K562 (cell line): ENCODE measurements at regions of chr16 and their contacts with region 1.

Region 1: DNA sequence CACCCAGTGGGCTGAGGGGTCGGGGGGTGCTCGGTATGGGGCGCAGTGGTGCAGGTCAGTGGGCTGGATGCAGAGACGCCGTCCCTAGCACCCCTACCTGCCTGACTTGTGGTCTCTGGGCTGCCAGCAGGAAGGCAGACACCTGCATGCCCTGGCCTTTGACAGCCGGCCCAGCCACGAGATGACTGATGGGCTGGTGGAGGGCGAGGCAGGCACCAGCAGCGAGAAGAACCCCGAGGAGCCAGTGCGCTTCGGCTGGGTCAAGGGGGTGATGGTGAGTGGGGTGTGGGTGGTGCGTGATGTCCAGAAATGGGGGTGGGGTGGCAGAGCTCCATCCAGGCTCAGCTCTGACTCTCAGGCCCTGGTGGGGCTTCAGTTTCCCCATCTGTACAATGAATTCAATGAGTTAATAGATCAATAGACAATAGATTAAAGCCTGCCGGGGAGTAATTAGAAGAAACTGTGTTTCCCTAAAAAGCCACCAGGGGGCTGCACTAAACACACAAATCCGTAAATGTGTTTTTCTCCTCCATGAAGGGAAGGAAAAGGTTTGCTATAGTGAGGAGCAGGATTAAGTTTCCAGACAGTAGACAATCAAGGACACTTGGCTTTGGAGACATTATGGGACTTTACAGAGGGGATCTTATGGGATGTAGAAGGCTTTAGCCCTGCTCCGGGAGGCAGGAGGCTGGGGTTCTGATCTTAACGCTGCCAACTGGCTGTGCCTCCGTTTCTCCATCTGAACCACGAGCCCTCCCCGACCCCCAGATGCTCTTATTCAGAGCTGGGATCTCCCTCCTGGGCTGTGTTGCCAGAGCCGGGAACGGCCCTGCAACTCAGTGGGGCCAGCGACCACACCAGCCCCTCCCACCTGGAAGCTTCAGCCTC is 2.2 kb downstream of the SLC12A3 start:
- DNase-seq: peak; percentile 44 to 65 (median 47)
- ATAC-seq: peak; percentile 34; the same call in 1 of the 3 replicates
- H3K4me3 ChIP-seq: no peak overlapping the region
- H3K27ac ChIP-seq: no peak overlapping the region
- H3K4me1 ChIP-seq: peaks cover 0 to 16% of the 10 kb centered on the region in 2 experiments; a peak in 3 of 5 replicates
- H3K27me3 ChIP-seq: peaks cover 0 to 10% of the 10 kb centered on the region in 2 experiments; a peak in 3 of 5 replicates
- CTCF ChIP-seq: peak; percentile 45 to 81 (median 72); a peak in 5 of 6 replicates
- EP300 ChIP-seq: no peak
- POLR2A ChIP-seq: no peak
- RAD21 ChIP-seq: peak; percentile 66 to 77

Region 2: DNA sequence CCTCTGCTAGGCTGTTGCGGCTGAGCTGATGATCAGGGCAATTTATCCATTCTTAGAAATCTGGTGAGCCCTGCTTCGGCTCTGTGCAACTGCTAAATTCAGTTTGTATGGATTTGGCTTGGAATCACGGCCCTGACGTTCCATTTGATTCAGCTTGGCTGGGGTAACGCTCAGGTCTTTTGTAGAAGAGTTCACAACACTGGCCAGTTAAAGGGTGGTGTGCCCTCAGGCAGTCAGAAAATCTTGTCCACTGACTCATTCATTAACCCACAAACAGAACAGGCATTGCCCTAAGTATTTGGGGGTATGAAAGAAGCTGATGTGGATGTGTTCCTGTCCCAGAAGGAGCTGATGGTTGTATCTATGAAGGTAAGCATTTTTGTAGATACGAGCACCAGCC is 622.0 kb before region 1 on chr16:
- CTCF ChIA-PET with region 1: no interaction called
- POLR2A ChIA-PET with region 1: no interaction called
- in situ Hi-C with region 1: no loop called
- intact Hi-C with region 1: no loop called
- DNase-seq: no peak
- ATAC-seq: no peak
- H3K4me3 ChIP-seq: no peak overlapping the region
- H3K27ac ChIP-seq: no peak overlapping the region
- H3K4me1 ChIP-seq: peaks cover 7% of the 10 kb centered on the region in 2 experiments; a peak in 4 of 5 replicates
- H3K27me3 ChIP-seq: peaks cover 0 to 4% of the 10 kb centered on the region in 2 experiments; a peak in 1 of 5 replicates
- CTCF ChIP-seq: no peak
- EP300 ChIP-seq: no peak
- POLR2A ChIP-seq: no peak
- RAD21 ChIP-seq: no peak

Region 3: DNA sequence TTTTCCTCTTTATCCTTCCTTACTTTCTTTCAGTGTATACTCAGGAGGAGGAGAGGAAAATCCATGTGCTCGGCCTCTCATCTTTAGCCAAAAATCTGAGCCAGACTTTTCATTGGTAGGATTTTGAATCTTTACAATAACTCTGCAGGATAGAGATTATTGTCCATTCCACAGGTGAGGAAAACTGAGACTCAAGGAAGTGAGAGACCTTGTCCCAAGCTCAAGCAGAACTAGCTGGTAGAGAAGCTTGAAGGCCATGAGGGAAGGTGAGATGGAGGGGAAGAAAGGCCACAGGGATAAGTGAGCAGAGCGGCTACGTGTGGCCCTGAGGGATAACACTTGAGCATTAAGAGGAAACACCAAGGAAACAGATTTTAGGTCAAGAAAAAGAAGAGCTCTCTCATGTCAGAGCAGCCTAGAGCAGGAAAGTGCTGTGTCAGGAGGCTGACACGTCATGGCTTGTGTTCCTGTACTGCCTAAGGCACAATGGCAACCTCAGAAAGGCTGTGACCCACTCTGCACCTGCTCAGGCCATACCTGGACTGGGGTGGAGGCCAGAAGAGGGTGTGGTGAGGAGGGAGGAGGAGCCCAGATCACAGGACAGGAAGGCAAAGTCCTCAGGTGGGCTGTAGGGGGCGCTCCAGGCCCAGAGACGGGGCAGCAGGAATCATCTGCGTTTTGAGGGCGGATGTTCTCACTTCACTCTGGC is 290.4 kb before region 1 on chr16:
- CTCF ChIA-PET with region 1: no interaction called
- POLR2A ChIA-PET with region 1: no interaction called
- in situ Hi-C with region 1: loop called (anchors 10 kb)
- intact Hi-C with region 1: loop called (anchors 2 kb)
- DNase-seq: peak; percentile 77 to 86 (median 84)
- ATAC-seq: peak; percentile 100
- H3K4me3 ChIP-seq: no peak overlapping the region
- H3K27ac ChIP-seq: no peak overlapping the region
- H3K4me1 ChIP-seq: no peaks in the 10 kb centered on the region
- H3K27me3 ChIP-seq: peaks cover 2 to 10% of the 10 kb centered on the region in 2 experiments; a peak in 4 of 5 replicates
- CTCF ChIP-seq: peak; percentile 93 to 96 (median 95)
- EP300 ChIP-seq: no peak
- POLR2A ChIP-seq: no peak
- RAD21 ChIP-seq: peak; percentile 88 to 96

Region 4: DNA sequence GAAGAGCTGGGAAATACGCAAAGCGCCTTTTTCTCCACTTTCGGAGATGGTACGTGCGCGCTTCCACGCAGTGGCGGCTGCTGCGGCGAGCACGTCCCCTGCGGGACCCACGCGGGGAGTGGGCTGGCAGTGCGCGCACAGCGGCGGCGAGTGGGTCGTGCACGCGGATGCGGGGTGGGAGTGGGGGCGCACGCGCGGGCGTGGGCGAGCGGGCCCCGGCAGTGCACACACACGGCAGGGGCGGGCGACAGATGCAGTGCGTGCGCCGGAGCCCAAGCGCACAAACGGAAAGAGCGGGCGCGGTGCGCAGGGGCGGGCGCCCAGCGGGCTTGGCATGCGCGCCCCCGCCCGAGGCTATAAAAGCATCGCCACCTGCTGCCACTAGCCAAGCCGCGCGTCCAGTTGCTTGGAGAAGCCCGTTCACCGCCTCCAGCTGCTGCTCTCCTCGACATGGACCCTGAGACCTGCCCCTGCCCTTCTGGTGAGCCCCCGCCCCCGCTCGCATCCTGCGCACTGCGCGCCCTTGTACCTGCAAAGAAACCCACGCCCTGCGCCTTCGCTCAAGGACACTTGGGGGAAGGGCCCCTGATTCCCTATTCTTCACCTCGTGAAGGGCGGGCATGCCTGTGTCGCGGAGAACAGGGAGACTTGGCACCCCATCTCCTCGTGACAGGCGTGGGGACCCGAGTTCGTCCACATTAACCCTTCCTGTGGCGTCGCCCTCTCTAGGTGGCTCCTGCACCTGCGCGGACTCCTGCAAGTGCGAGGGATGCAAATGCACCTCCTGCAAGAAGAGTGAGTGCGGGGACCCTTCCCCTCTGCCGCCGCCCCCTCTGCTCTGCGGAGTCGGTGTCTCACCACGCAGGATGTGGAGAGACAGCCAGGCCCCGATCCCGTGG is 277.8 kb before region 1 on chr16 and contains the start of gene MT3:
- CTCF ChIA-PET with region 1: no interaction called
- POLR2A ChIA-PET with region 1: no interaction called
- in situ Hi-C with region 1: loop called (anchors 10 kb)
- intact Hi-C with region 1: no loop called
- DNase-seq: no peak
- ATAC-seq: no peak
- H3K4me3 ChIP-seq: no peak within 1 kb of the TSS
- H3K27ac ChIP-seq: no peak within 1 kb of the TSS
- H3K4me1 ChIP-seq: peaks cover 0 to 6% of the 10 kb centered on the region in 2 experiments; a peak in 1 of 5 replicates
- H3K27me3 ChIP-seq: peaks cover 17 to 62% of the 10 kb centered on the region in 2 experiments
- CTCF ChIP-seq: no peak
- EP300 ChIP-seq: no peak
- POLR2A ChIP-seq: no peak
- RAD21 ChIP-seq: no peak
- polyA plus RNA-seq, gene MT3: not detected

Region 5: GRCh38 chr16:56847173-56847910 is 19.8 kb before region 1 on chr16:
- CTCF ChIA-PET with region 1: no interaction called
- POLR2A ChIA-PET with region 1: no interaction called
- in situ Hi-C with region 1: no loop called
- intact Hi-C with region 1: loop called (anchors 1 kb)
- DNase-seq: no peak
- ATAC-seq: no peak
- H3K4me3 ChIP-seq: no peak overlapping the region
- H3K27ac ChIP-seq: no peak overlapping the region
- H3K4me1 ChIP-seq: no peaks in the 10 kb centered on the region; a peak in 2 of 5 replicates
- H3K27me3 ChIP-seq: no peaks in the 10 kb centered on the region
- CTCF ChIP-seq: no peak
- EP300 ChIP-seq: no peak
- POLR2A ChIP-seq: no peak
- RAD21 ChIP-seq: no peak

Region 6: DNA sequence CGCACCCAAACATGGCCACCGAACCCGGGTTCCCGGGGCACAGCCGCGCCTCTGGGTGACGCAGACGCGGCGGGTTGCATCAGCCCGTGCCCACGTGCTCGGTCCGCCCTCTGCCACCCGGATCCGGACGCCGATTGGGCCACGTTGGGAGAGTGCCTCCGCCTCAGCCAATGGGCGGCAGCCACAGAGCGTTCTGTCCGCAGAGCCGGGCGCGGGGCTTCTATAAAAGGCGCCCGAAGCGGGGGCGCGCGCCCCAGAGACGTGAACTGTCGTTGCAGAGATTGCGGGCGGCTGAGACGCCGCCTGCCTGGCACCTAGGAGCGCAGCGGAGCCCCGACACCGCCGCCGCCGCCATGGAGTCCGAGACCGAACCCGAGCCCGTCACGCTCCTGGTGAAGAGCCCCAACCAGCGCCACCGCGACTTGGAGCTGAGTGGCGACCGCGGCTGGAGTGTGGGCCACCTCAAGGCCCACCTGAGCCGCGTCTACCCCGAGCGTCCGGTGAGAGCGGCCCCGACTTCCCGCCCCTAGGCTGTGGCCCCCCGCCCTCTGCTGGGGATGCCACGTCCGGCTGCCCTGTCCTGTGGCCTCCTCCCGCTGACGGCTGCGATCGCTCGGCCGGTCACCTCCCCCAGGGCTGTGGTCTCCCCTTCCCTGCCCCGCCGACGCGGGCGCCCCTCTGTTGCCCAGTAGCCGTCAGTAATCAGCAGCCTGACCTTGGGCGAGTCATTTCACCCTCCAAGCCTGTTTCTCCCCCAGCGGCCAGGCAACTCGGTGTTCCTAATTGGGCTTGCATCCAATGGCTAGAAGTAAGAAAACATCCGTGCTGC is 64.9 kb after region 1 on chr16 and contains the start of gene HERPUD1:
- CTCF ChIA-PET with region 1: no interaction called
- POLR2A ChIA-PET with region 1: interaction called, 4 read pairs
- in situ Hi-C with region 1: no loop called
- intact Hi-C with region 1: loop called (anchors 5 kb)
- DNase-seq: peak; percentile 97 to 99 (median 98)
- ATAC-seq: peak; percentile 92
- H3K4me3 ChIP-seq: peak within 1 kb of the TSS; percentile 95
- H3K27ac ChIP-seq: peak within 1 kb of the TSS; percentile 91
- H3K4me1 ChIP-seq: peaks cover 17 to 22% of the 10 kb centered on the region in 2 experiments; a peak in 4 of 5 replicates
- H3K27me3 ChIP-seq: no peaks in the 10 kb centered on the region
- CTCF ChIP-seq: peak in 2 of 3 experiments; percentile 15 to 23; a peak in 2 of 6 replicates
- EP300 ChIP-seq: peak; percentile 18; the same call in 1 of the 2 replicates
- POLR2A ChIP-seq: peak; percentile 95
- RAD21 ChIP-seq: no peak
- polyA plus RNA-seq, gene HERPUD1: 14.2 to 17.8 TPM

Region 7: GRCh38 chr16:56950881-56951771 is 83.9 kb after region 1 on chr16:
- CTCF ChIA-PET with region 1: interaction called, 16 read pairs
- POLR2A ChIA-PET with region 1: interaction called, 3 read pairs
- in situ Hi-C with region 1: loop called (anchors 5 kb)
- intact Hi-C with region 1: loop called (anchors 1 kb)
- DNase-seq: peak; percentile 45 to 71 (median 60)
- ATAC-seq: peak; percentile 92
- H3K4me3 ChIP-seq: no peak overlapping the region
- H3K27ac ChIP-seq: no peak overlapping the region
- H3K4me1 ChIP-seq: no peaks in the 10 kb centered on the region
- H3K27me3 ChIP-seq: no peaks in the 10 kb centered on the region; a peak in 1 of 5 replicates
- CTCF ChIP-seq: peak; percentile 77 to 83 (median 82)
- EP300 ChIP-seq: no peak
- POLR2A ChIP-seq: no peak
- RAD21 ChIP-seq: peak; percentile 64 to 86